ENCODE measurements at regions of chrX and their contacts with region 1.

Region 1: DNA sequence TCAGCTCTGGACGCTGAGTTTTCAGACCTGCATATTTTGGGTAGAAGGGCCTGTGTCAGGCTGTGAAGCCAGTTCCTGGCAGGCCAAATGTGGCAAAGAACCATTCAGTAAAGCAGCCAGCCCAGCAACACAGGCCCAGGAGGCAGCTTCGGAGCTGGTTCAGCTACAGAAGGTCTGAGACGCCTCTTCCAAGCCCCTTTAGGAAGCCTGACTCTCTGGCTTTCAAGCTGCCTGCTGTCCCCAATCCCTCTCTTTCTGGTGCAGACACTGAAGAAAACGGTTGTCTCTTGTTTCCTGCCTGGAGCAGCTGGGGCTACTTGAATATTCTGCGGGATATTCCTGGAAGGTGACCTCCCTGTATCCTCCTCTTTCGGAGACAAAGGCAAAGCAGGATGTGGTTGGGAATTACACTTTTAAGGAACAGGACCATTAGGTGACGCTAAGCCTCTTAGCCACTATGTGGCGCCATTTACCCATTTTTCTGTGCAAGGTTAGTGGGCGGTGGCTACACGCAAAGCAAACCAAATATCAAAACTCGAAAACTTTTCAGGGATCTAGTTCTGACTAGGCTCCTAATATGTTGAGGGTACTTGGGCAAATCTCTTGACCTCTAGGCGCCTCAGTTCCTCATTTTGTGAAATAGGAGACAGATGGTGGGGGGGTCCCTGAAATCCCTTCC is 47.2 kb upstream of the LAS1L start:
- DNase-seq: peak in 8 of 9 donors; percentile 33 to 72 (median 59)
- ATAC-seq: peak; percentile 79
- H3K4me3 ChIP-seq: no peak overlapping the region
- H3K4me3 Mint-ChIP-seq: no peak overlapping the region
- H3K27ac ChIP-seq: no peak overlapping the region
- H3K27ac Mint-ChIP-seq: peak overlapping the region in 1 of 9 donors; percentile 62
- H3K4me1 ChIP-seq: peaks cover 5 to 7% of the 10 kb centered on the region in 2 donors
- H3K4me1 Mint-ChIP-seq: peaks cover 2 to 13% (median 5%) of the 10 kb centered on the region in 7 donors
- H3K27me3 ChIP-seq: no peaks in the 10 kb centered on the region
- H3K27me3 Mint-ChIP-seq: no peaks in the 10 kb centered on the region

Region 2: GRCh38 chrX:65537229-65537628 is 44.6 kb before region 1 on chrX:
- CTCF ChIA-PET with region 1: no interaction called
- POLR2A ChIA-PET with region 1: no interaction called
- intact Hi-C with region 1: no loop called
- DNase-seq: no peak
- ATAC-seq: no peak
- H3K4me3 ChIP-seq: no peak overlapping the region
- H3K4me3 Mint-ChIP-seq: peak overlapping the region in 1 of 10 donors; percentile 34
- H3K27ac ChIP-seq: no peak overlapping the region
- H3K27ac Mint-ChIP-seq: no peak overlapping the region
- H3K4me1 ChIP-seq: peaks cover 10 to 13% of the 10 kb centered on the region in 2 donors
- H3K4me1 Mint-ChIP-seq: peaks cover 5 to 28% (median 16%) of the 10 kb centered on the region in 7 donors
- H3K27me3 ChIP-seq: no peaks in the 10 kb centered on the region
- H3K27me3 Mint-ChIP-seq: no peaks in the 10 kb centered on the region

Region 3: GRCh38 chrX:66110112-66110511 is 528.3 kb after region 1 on chrX:
- CTCF ChIA-PET with region 1: interaction called, 5 read pairs
- POLR2A ChIA-PET with region 1: no interaction called
- intact Hi-C with region 1: loop called in 1 of 2 experiments (anchors 1 kb)
- DNase-seq: peak in 6 of 9 donors; percentile 7 to 37 (median 21)
- ATAC-seq: peak; percentile 66
- H3K4me3 ChIP-seq: no peak overlapping the region
- H3K4me3 Mint-ChIP-seq: no peak overlapping the region
- H3K27ac ChIP-seq: no peak overlapping the region
- H3K27ac Mint-ChIP-seq: no peak overlapping the region
- H3K4me1 ChIP-seq: no peaks in the 10 kb centered on the region
- H3K4me1 Mint-ChIP-seq: peaks cover 0 to 18% (median 7%) of the 10 kb centered on the region in 7 donors
- H3K27me3 ChIP-seq: no peaks in the 10 kb centered on the region
- H3K27me3 Mint-ChIP-seq: no peaks in the 10 kb centered on the region

Region 4: GRCh38 chrX:66200855-66201795 is 619.3 kb after region 1 on chrX:
- CTCF ChIA-PET with region 1: no interaction called
- POLR2A ChIA-PET with region 1: no interaction called
- intact Hi-C with region 1: loop called (anchors 10 kb)
- DNase-seq: peak in 2 of 9 donors; percentile 5 to 12
- ATAC-seq: no peak
- H3K4me3 ChIP-seq: no peak overlapping the region
- H3K4me3 Mint-ChIP-seq: peak overlapping the region in 8 of 10 donors; percentile 0 to 63 (median 21)
- H3K27ac ChIP-seq: no peak overlapping the region
- H3K27ac Mint-ChIP-seq: peak overlapping the region in 2 of 9 donors; percentile 13 to 25
- H3K4me1 ChIP-seq: no peaks in the 10 kb centered on the region
- H3K4me1 Mint-ChIP-seq: peaks cover 16 to 31% (median 22%) of the 10 kb centered on the region in 7 donors
- H3K27me3 ChIP-seq: no peaks in the 10 kb centered on the region
- H3K27me3 Mint-ChIP-seq: no peaks in the 10 kb centered on the region

Region 5: DNA sequence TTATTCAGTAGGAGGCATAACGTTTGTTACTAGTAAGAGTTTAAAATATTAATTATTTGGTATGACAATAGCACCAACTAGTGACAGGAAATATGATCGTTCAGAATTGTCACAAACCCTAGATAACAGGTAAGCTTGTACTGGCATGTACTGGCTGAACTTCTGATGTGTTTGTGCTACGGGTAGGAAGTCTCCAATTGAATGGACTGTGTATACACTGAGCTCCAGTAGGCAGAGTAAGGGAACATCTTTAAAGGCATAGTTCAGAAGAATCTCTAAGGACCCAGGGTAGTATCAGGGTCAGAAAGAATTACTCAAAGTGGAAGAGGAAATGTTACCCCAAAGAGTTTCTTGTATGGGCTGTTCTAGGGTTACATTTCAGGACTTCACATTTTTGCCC is 826.7 kb after region 1 on chrX:
- CTCF ChIA-PET with region 1: interaction called, 3 read pairs
- POLR2A ChIA-PET with region 1: no interaction called
- intact Hi-C with region 1: loop called (anchors 1 kb)
- DNase-seq: peak in 4 of 9 donors; percentile 1 to 37 (median 6)
- ATAC-seq: no peak
- H3K4me3 ChIP-seq: no peak overlapping the region
- H3K4me3 Mint-ChIP-seq: no peak overlapping the region
- H3K27ac ChIP-seq: no peak overlapping the region
- H3K27ac Mint-ChIP-seq: no peak overlapping the region
- H3K4me1 ChIP-seq: no peaks in the 10 kb centered on the region
- H3K4me1 Mint-ChIP-seq: peaks cover 0 to 4% (median 0%) of the 10 kb centered on the region in 7 donors
- H3K27me3 ChIP-seq: no peaks in the 10 kb centered on the region
- H3K27me3 Mint-ChIP-seq: peaks cover 0 to 5% (median 3%) of the 10 kb centered on the region in 5 donors

Region 6: DNA sequence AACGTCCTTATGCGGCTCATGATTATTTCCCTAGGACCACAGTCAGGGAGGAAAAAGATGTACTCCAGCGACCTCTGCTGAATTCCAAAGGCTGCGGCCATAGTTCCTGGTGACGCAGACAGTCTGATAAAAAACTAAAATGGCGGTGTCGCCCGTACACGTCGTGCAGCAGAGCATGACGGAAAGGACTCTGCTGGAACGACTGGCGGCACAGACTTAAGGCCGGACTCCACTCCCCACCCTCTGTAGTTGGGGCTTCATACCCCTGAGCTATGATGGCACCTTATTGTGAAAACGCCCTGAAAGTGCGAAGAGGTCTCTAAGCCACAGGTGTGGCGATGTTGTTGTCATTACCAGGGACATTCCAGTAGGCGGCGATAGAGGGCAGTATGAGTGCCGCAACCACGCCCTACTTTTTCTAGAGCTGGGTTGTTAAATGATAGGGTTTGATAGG is 1147.0 kb after region 1 on chrX:
- CTCF ChIA-PET with region 1: interaction called, 7 read pairs
- POLR2A ChIA-PET with region 1: no interaction called
- intact Hi-C with region 1: loop called in 1 of 2 experiments (anchors 1 kb)
- DNase-seq: peak; percentile 25 to 75 (median 68)
- ATAC-seq: peak; percentile 91
- H3K4me3 ChIP-seq: peak overlapping the region; percentile 82
- H3K4me3 Mint-ChIP-seq: peak overlapping the region; percentile 70 to 96 (median 92)
- H3K27ac ChIP-seq: peak overlapping the region; percentile 67
- H3K27ac Mint-ChIP-seq: peak overlapping the region; percentile 85 to 100 (median 97)
- H3K4me1 ChIP-seq: no peaks in the 10 kb centered on the region
- H3K4me1 Mint-ChIP-seq: peaks cover 0 to 8% (median 0%) of the 10 kb centered on the region in 7 donors
- H3K27me3 ChIP-seq: no peaks in the 10 kb centered on the region
- H3K27me3 Mint-ChIP-seq: no peaks in the 10 kb centered on the region

Measured in naive thymus-derived CD4-positive, alpha-beta T cell (primary cell).